Transverse colon (tissue), 4 donors: ENCODE measurements at regions of chr13 and their contacts with region 1.

Region 1: DNA sequence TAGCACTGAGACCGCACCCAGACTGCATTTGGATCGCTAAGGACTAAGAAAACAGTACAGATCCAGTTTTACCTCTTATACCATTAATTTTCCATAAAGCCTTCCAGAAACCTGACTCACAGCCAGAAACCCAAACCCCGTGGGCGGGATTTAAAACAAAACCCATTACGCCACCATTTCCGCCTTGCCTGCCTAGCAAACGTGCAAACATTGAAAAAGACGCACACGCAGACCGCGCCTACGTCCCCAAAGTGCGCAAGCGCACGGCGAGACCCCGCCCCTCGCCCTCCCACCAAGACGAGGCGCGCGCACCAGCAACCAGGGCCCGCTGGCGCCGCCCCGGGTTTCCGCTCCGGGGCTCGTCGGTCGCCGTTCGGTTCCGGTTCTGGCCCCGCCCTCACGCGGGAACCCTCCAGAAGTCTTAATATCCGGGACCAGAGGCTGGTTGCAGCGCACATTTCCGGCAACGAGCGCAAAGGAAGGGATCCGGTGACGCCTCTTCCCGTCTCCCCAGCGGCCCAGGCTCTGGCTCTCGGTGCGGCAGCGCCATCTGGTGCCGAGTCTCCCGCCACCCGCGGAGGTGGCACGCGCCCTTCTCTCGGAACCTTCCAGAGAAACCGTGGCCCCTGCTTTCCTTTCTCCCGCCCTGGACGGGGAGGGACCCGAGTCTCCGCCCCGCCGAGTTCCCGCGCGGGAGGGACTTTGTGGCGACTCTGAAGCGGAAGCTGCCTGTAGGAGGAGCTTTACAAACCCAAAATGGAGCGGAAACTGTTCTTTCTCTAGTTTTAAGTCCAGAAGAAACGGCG is 256.9 kb upstream of the STARD13 start:
- DNase-seq: peak; percentile 99
- H3K4me3 ChIP-seq: peak overlapping the region; percentile 35 to 65 (median 41)
- H3K27ac ChIP-seq: peak overlapping the region; percentile 94 to 99 (median 97)
- H3K4me1 ChIP-seq: peaks cover 0 to 38% (median 29%) of the 10 kb centered on the region in 4 donors
- H3K27me3 ChIP-seq: no peaks in the 10 kb centered on the region
- CTCF ChIP-seq: peak; percentile 72 to 93 (median 82)
- EP300 ChIP-seq: peak; percentile 97
- POLR2A ChIP-seq: peak; percentile 64

Region 2: GRCh38 chr13:32586080-32586900 is 956.2 kb before region 1 on chr13 and contains the start of gene PDS5B:
- in situ Hi-C with region 1: loop called (anchors 10 to 25 kb)
- intact Hi-C with region 1: loop called (anchors 10 kb)
- DNase-seq: peak; percentile 95
- H3K4me3 ChIP-seq: peak within 1 kb of the TSS; percentile 74 to 88 (median 80)
- H3K27ac ChIP-seq: peak within 1 kb of the TSS; percentile 96 to 98 (median 97)
- H3K4me1 ChIP-seq: peaks cover 0 to 36% (median 23%) of the 10 kb centered on the region in 4 donors
- H3K27me3 ChIP-seq: no peaks in the 10 kb centered on the region
- CTCF ChIP-seq: peak; percentile 68 to 90 (median 85)
- EP300 ChIP-seq: no peak
- POLR2A ChIP-seq: peak; percentile 66
- total RNA-seq, gene PDS5B: 10.0 to 91.3 (median 32.1) TPM

Region 3: GRCh38 chr13:32802159-32802558 is 740.3 kb before region 1 on chr13:
- in situ Hi-C with region 1: no loop called
- intact Hi-C with region 1: no loop called
- DNase-seq: no peak
- H3K4me3 ChIP-seq: no peak overlapping the region
- H3K27ac ChIP-seq: no peak overlapping the region
- H3K4me1 ChIP-seq: peaks cover 0 to 8% (median 0%) of the 10 kb centered on the region in 4 donors
- H3K27me3 ChIP-seq: no peaks in the 10 kb centered on the region
- CTCF ChIP-seq: no peak
- EP300 ChIP-seq: no peak
- POLR2A ChIP-seq: no peak

Region 4: DNA sequence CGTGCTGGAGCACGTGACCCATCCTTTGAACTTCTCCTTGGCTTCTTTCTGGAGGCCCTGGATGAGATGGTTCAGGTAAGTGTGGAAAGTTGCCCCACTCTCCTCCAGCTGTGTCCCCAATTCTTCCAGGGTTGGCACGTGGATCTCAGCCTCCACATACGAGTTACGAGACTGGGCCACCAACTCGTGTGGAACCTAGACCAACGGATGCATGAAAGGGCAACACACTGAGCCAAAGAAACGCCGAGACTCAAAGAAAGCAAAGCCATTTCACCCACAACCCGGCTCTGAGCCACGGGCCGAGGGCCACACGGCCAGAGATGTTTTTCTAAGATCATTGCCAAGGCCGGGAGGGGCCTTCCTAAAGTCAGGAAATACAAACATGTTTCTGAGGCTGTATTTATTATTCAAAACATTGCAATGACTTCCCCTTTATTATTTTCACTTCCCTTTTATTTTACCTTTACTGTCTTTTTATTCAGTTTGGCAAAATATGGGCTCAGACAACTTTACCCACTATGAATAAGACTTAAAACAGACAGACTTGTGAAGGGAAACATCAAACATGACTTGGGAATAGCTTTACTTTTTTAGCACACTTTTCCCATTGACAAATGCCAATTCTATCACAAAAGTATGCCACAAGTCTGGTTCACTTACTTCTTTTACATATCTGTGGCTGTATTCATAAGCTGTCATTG is 431.6 kb before region 1 on chr13:
- in situ Hi-C with region 1: loop called in 1 of 4 experiments (anchors 25 kb)
- intact Hi-C with region 1: no loop called
- DNase-seq: no peak
- H3K4me3 ChIP-seq: no peak overlapping the region
- H3K27ac ChIP-seq: peak overlapping the region; percentile 52 to 75 (median 72)
- H3K4me1 ChIP-seq: peaks cover 20 to 56% (median 42%) of the 10 kb centered on the region in 4 donors
- H3K27me3 ChIP-seq: no peaks in the 10 kb centered on the region
- CTCF ChIP-seq: no peak
- EP300 ChIP-seq: no peak
- POLR2A ChIP-seq: no peak

Region 5: GRCh38 chr13:33204130-33204927 is 338.2 kb before region 1 on chr13:
- in situ Hi-C with region 1: loop called in 1 of 4 experiments (anchors 25 kb)
- intact Hi-C with region 1: loop called (anchors 10 kb)
- DNase-seq: peak; percentile 59
- H3K4me3 ChIP-seq: peak overlapping the region; percentile 9 to 33 (median 18)
- H3K27ac ChIP-seq: peak overlapping the region; percentile 71 to 84 (median 79)
- H3K4me1 ChIP-seq: peaks cover 11 to 53% (median 24%) of the 10 kb centered on the region in 4 donors
- H3K27me3 ChIP-seq: no peaks in the 10 kb centered on the region
- CTCF ChIP-seq: no peak
- EP300 ChIP-seq: peak; percentile 43
- POLR2A ChIP-seq: no peak

Region 6: DNA sequence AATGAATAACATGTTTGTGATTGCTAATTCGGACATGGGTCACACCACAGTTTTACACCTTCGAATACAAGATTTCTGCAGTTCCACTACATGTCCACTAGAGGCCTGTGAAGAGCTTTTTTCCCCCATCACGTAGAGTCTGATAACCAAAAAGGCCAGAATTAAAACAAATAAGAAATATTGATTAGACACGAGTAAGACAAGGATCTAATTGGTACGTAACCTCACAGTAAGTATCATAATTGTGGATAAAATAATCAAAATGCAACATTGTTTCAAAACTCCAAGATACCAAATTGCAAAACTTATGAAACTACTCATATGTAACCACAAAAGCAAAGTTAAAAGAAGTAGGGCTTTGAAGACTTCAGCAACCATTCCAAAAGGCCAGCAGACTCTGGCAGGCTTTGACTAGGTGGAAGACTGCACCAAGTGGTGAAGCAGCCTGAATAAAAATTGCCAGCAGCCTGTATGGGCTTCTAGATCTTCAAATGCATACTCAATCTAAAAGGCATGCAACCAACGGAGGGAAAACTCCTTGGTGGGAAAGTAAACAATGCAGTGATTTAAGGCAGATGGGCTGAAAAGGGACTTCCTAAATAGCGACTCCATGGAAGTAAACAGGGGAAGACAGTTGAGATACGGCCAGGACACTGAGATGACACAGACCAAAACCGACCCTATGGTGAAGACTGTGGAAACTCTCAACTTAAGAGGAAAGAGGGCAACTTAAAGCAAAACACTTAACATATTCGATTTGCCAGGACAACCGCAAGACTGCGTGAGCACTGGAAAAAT is 313.6 kb before region 1 on chr13:
- in situ Hi-C with region 1: loop called in 2 of 4 experiments (anchors 25 kb)
- intact Hi-C with region 1: no loop called
- DNase-seq: no peak
- H3K4me3 ChIP-seq: no peak overlapping the region
- H3K27ac ChIP-seq: peak overlapping the region; percentile 64 to 69 (median 66)
- H3K4me1 ChIP-seq: peaks cover 14 to 42% (median 28%) of the 10 kb centered on the region in 4 donors
- H3K27me3 ChIP-seq: no peaks in the 10 kb centered on the region
- CTCF ChIP-seq: peak; percentile 86 to 94 (median 93)
- EP300 ChIP-seq: no peak
- POLR2A ChIP-seq: no peak

Region 7: DNA sequence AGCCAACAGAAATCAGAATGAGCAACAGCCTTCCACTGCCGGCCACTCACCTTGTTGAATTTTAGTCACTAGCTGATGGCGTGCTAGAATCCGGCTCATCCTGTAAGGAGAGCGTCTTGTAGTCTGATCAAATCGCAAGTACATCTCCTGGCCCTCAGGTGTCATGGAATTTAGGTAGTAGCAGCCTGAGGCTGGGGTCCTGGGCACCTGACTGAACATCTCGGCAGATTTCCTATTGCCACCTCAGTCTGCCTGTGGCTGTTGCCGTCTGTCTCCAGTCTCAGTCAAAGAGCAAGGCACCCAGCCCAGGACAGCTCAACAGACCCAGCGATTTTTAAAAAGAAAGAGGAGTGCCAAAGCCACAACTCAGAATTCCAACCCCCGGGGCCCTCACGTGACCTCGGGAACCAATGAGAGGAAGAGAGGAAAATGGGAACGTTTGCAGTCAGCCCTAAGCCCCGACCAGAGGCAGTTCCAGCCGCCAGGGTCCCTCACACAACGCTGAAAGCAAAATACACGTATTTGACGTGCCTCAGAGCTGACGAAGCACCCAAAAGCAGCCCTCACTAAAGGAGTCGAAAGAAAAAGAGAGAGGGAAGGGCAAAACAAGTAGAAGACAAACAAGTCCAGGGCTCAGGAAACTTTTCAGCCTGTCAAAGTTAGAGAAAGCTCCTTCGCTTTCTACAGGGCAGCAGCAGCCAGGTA is 256.9 kb before region 1 on chr13 and contains the start of gene STARD13:
- in situ Hi-C with region 1: no loop called
- intact Hi-C with region 1: loop called (anchors 10 kb)
- DNase-seq: peak; percentile 93
- H3K4me3 ChIP-seq: peak within 1 kb of the TSS; percentile 47 to 82 (median 54)
- H3K27ac ChIP-seq: peak within 1 kb of the TSS; percentile 90 to 95 (median 92)
- H3K4me1 ChIP-seq: peaks cover 5 to 44% (median 22%) of the 10 kb centered on the region in 4 donors
- H3K27me3 ChIP-seq: no peaks in the 10 kb centered on the region
- CTCF ChIP-seq: peak; percentile 26 to 70 (median 29)
- EP300 ChIP-seq: no peak
- POLR2A ChIP-seq: peak; percentile 94
- total RNA-seq, gene STARD13: 18.1 to 107 (median 41.5) TPM

Region 8: DNA sequence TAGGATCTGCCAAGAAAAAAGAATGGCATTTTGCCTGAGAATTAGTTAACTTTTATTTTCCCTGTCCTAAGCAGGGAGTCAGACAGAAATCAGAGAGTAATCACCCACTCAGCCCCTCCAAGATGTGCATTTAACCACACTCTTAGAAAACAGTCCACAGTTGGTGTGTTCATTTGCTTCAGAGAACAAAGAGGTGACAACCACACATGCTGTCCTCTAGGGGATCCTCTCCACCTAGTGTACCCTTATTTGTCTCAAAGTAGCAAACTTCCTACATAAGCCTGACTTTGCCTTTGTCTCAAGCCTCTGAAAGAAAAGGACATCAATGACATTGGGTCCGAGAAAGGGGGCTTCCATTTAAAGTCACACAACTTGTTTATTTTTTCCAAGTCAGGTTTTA is 168.4 kb after region 1 on chr13:
- in situ Hi-C with region 1: loop called in 1 of 4 experiments (anchors 10 kb)
- intact Hi-C with region 1: no loop called
- DNase-seq: no peak
- H3K4me3 ChIP-seq: no peak overlapping the region
- H3K27ac ChIP-seq: no peak overlapping the region
- H3K4me1 ChIP-seq: no peaks in the 10 kb centered on the region
- H3K27me3 ChIP-seq: no peaks in the 10 kb centered on the region
- CTCF ChIP-seq: no peak
- EP300 ChIP-seq: no peak
- POLR2A ChIP-seq: no peak